ENCODE measurements at regions of chr4 and their contacts with region 1.

Region 1: DNA sequence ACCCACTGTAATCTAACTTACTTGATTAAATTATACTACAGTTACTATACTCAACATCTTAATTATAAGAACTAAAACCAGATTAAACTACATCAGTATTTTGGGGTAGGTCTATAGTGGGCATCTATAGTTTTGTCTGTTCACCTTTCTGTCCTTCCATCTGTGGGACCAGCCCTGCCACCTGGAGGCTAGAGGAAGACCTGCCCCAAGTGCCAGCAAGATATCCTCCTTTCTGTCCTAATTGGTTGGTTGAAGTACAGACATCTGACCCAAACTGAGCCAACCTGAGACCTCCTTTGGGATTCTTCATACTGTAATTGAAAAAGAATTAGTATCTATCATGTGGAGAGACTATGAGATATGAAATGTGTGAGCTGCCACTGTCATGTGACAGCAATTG is 172.2 kb upstream of the TLL1 start:
- DNase-seq: no peak
- H3K4me3 ChIP-seq: no peak overlapping the region
- H3K27ac ChIP-seq: no peak overlapping the region
- H3K4me1 ChIP-seq: no peaks in the 10 kb centered on the region
- H3K27me3 ChIP-seq: no peaks in the 10 kb centered on the region
- CTCF ChIP-seq: no peak
- POLR2A ChIP-seq: no peak

Region 2: DNA sequence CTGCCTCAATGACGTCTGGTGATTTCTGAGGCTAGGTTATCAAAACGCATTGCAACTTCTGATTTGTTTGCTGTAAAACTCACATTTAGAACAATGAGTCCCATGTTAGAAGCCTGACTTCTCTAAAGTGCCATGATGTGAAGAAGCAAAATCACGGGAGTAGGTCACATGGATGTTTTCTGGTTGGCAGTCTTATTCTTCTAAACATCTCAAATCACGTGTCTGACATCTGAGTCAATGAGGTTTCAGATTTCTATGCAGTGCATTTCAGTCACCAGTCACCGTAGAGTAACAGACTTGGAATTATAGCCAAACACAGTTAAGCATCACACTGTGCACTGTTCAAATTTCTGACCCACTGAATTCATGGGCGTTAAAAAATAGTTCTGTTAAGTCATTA is 1724.3 kb before region 1 on chr4:
- intact Hi-C with region 1: loop called (anchors 10 kb)
- DNase-seq: no peak
- H3K4me3 ChIP-seq: no peak overlapping the region
- H3K27ac ChIP-seq: no peak overlapping the region
- H3K4me1 ChIP-seq: no peaks in the 10 kb centered on the region
- H3K27me3 ChIP-seq: no peaks in the 10 kb centered on the region
- CTCF ChIP-seq: no peak
- POLR2A ChIP-seq: no peak

Region 3: GRCh38 chr4:165668694-165669093 is 32.2 kb before region 1 on chr4:
- intact Hi-C with region 1: no loop called
- DNase-seq: no peak
- H3K4me3 ChIP-seq: no peak overlapping the region
- H3K27ac ChIP-seq: no peak overlapping the region
- H3K4me1 ChIP-seq: no peaks in the 10 kb centered on the region
- H3K27me3 ChIP-seq: no peaks in the 10 kb centered on the region
- CTCF ChIP-seq: no peak
- POLR2A ChIP-seq: no peak

Region 4: GRCh38 chr4:166252487-166253402 is 551.9 kb after region 1 on chr4:
- intact Hi-C with region 1: loop called (anchors 5 kb)
- DNase-seq: no peak
- H3K4me3 ChIP-seq: no peak overlapping the region
- H3K27ac ChIP-seq: no peak overlapping the region
- H3K4me1 ChIP-seq: no peaks in the 10 kb centered on the region
- H3K27me3 ChIP-seq: no peaks in the 10 kb centered on the region
- CTCF ChIP-seq: no peak
- POLR2A ChIP-seq: no peak

Measured in breast epithelium (tissue), 4 donors.